ENCODE measurements at regions of chr1 and their contacts with region 1.

Region 1: GRCh38 chr1:37514350-37515184 is at the start of gene MEAF6:
- DNase-seq: no peak
- H3K4me3 ChIP-seq: peak within 1 kb of the TSS; percentile 81
- CTCF ChIP-seq: peak; percentile 49

Region 2: DNA sequence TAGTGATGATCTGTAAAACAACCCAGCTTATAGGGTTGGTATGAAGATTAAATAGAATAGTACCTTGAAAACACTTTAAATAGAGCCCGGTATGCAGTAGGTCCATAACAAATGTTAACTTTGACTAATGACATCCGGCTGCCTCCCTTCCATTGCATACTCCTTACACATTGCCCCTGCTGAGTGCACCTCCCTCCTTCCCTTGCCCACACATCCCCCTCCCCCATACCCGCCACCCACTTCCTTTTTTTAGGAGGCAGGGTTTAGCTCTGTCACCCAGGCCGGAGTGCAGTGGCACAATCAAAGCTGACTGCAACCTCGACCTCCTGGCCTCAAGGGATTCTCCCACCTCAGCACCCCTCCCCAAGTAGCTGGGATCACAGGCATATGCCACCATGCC is 64.6 kb before region 1 on chr1:
- CTCF ChIA-PET with region 1: interaction called, 28 read pairs
- POLR2A ChIA-PET with region 1: no interaction called
- DNase-seq: no peak
- H3K4me3 ChIP-seq: no peak overlapping the region
- CTCF ChIP-seq: no peak

Region 3: DNA sequence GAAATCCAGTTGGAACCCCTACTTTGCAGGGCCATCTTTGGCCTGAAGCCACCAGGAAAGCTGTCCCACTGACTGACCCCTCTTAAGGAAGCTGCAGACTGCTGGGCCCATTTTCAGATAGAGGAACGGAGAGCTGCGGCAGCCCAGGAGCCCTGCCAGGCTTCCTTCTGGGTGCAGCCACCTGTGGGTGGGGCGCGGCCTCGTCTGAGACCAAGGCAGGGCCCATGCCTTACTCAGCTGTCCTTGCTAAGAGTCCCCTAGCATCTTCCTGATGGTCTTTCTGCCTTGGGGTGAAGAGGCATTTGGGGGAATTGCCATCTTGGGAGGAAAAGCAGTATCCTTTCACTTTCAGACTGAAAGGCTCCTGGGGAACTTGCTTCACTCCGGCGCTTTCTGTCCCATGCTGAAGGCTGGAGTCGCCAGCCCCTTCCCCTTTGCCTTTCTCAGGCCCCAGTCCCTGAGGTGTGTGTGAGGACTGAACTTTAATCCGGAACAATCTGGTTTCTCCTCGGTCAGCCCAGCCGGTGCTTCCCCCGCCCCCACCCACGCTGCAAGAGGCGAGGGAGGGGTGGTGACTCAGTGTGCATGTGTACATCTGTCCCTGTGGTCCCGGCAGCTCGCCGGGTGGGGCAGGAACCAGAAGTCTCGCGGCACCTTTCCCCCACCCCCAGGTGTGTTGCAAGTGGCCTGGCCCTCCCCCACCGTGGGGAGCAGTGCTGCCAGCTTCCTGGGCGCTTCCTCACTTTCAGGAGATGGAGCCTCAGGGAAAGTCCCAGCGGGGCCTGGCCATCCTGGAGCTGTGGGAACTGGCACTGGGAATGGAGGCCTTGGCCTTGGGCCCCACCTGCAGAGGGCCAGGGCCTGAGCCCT is 35.1 kb before region 1 on chr1:
- CTCF ChIA-PET with region 1: interaction called, 23 read pairs
- POLR2A ChIA-PET with region 1: interaction called, 4 read pairs
- DNase-seq: no peak
- H3K4me3 ChIP-seq: peak overlapping the region; percentile 48
- CTCF ChIP-seq: no peak

Region 4: DNA sequence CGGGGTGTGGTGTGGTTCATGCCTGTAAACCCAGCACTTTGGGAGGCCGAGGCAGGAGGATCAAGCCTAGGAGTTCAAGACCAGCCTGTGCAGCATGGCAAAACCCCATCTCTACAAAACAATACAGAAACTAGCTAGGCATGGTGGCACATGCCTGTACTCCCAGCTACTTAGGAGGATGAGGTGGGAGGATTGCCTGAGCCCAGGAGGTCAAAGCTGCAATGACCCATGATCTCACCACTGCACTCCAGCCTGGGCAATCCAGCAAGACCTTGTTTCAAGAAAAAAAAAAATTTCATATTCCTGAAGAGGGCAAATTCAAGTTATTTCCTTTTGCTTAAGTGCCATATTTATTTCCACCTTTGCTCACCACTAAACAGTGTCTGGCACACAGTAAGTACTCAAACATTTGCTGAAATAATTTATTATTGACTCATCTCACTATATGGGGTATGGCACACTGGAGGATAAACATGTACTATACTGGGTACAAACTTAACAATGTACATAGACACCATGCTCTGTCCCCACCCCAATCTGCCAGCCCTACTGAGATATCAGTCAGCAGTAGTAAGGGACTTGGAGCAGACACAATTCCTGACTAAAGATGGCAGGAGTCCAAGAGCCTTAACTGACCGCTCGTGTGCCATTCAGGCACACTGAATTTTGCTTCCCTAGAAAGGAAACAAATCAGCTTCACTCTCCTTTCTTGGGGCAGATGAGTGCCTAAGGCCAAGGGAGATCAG is 15.5 kb before region 1 on chr1:
- CTCF ChIA-PET with region 1: interaction called, 96 read pairs
- POLR2A ChIA-PET with region 1: no interaction called
- DNase-seq: no peak
- H3K4me3 ChIP-seq: no peak overlapping the region
- CTCF ChIP-seq: no peak

Region 5: GRCh38 chr1:37549341-37549740 is 34.8 kb after region 1 on chr1:
- CTCF ChIA-PET with region 1: interaction called, 21 read pairs
- POLR2A ChIA-PET with region 1: no interaction called
- DNase-seq: no peak
- H3K4me3 ChIP-seq: no peak overlapping the region
- CTCF ChIP-seq: no peak

Region 6: GRCh38 chr1:37682334-37682987 is 167.9 kb after region 1 on chr1:
- CTCF ChIA-PET with region 1: interaction called, 31 read pairs
- POLR2A ChIA-PET with region 1: no interaction called
- DNase-seq: no peak
- H3K4me3 ChIP-seq: no peak overlapping the region
- CTCF ChIP-seq: peak; percentile 79

Measured in AG04449 (cell line).